K562 (cell line): ENCODE measurements at regions of chr9 and their contacts with region 1.

Region 1: GRCh38 chr9:137492464-137493162 is 33.5 kb upstream of the NSMF start:
- DNase-seq: peak; percentile 97 to 99 (median 99)
- ATAC-seq: peak; percentile 99
- H3K4me3 ChIP-seq: no peak overlapping the region
- H3K27ac ChIP-seq: peak overlapping the region; percentile 55; the same call in 2 of the 3 replicates
- H3K4me1 ChIP-seq: peaks cover 44 to 64% of the 10 kb centered on the region in 2 experiments
- H3K27me3 ChIP-seq: no peaks in the 10 kb centered on the region; a peak in 1 of 5 replicates
- CTCF ChIP-seq: no peak
- EP300 ChIP-seq: no peak
- POLR2A ChIP-seq: no peak
- RAD21 ChIP-seq: no peak

Region 2: DNA sequence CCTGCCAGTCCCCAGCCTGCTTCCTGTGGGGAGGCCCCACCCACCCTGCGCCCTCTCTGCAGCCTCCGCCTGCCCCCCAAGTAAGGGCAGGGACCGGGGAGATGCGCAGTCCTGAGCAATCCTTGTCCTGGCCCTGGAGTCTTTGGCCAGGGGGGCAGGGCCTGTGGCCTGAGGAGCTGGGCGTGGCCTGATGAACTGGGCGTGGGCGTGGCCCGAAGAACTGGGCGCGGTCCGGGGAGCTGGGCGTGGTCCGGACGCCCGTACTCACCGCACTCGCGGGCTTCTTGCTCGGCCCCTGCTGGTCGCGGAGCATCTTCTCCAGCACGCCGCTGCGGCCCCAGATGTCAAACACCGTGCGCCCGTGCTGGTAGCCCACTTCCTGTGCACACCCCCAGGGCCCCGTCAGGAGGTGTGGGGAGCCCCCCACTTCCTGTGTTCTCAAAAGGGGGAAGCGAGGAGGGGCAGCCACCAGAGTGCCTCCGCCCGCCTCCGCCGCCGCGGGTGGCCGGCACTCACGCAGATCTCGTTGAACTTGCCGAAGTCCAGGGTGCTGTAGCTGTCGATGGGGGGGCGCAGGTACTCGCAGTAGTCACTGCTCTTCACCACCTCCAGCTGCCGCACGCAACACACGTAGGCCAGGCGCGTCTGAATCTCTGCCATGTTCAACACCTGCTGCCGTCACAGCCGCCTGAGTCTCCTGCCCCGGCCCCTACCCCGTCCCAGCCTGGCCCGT is 30.8 kb before region 1 on chr9:
- CTCF ChIA-PET with region 1: no interaction called
- POLR2A ChIA-PET with region 1: interaction called, 3 read pairs
- in situ Hi-C with region 1: no loop called
- intact Hi-C with region 1: loop called (anchors 2 kb)
- DNase-seq: peak; percentile 92 to 95 (median 94)
- ATAC-seq: peak; percentile 96
- H3K4me3 ChIP-seq: peak overlapping the region; percentile 32
- H3K27ac ChIP-seq: no peak overlapping the region
- H3K4me1 ChIP-seq: peaks cover 17 to 95% of the 10 kb centered on the region in 2 experiments
- H3K27me3 ChIP-seq: no peaks in the 10 kb centered on the region
- CTCF ChIP-seq: peak; percentile 50 to 62 (median 52)
- EP300 ChIP-seq: no peak
- POLR2A ChIP-seq: 0 out of 2 replicates have a peak, but pooled peaks have one; percentile 45
- RAD21 ChIP-seq: peak in 1 of 2 experiments; percentile 29; a peak in 3 of 4 replicates

Region 3: DNA sequence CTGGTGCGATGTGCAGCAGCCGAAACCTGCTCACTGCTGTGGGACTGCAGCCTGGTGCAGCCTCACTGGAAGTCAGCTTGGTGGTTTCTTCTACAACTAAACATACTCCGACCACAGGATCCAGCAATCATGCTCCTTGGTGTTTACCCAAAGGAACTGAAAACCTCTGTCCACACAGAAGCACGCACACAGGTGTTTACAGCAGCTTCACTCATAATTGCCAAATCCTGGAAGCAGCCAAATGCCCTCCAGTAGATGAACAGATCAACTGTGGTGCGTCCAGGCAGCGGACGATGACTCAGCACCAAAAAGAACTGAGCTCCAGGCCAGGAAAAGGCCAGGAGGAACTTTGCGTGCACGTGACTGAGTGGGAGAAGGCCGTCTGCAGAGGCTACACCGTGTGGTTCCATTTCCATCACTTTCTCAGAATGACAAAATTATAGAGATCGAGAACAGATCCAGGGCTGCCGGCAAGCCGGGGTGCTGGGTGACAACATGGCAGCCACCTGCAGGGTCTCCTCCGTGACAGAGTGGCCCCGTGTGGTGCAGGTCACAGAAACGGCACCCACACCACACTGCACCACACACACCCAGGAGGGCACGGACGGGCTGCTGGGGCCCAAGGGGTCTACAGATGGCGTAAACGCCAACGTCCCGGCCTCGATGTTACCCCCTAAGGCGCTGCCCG is 10.4 kb before region 1 on chr9:
- CTCF ChIA-PET with region 1: no interaction called
- POLR2A ChIA-PET with region 1: interaction called, 11 read pairs
- in situ Hi-C with region 1: no loop called
- intact Hi-C with region 1: no loop called
- DNase-seq: peak; percentile 73 to 91 (median 76)
- ATAC-seq: peak; percentile 95
- H3K4me3 ChIP-seq: no peak overlapping the region
- H3K27ac ChIP-seq: peak overlapping the region; percentile 82
- H3K4me1 ChIP-seq: peaks cover 11 to 79% of the 10 kb centered on the region in 2 experiments
- H3K27me3 ChIP-seq: no peaks in the 10 kb centered on the region
- CTCF ChIP-seq: no peak
- EP300 ChIP-seq: peak; percentile 57
- POLR2A ChIP-seq: no peak
- RAD21 ChIP-seq: no peak

Region 4: GRCh38 chr9:137789295-137789895 is 296.8 kb after region 1 on chr9:
- CTCF ChIA-PET with region 1: no interaction called
- POLR2A ChIA-PET with region 1: no interaction called
- in situ Hi-C with region 1: no loop called
- intact Hi-C with region 1: no loop called
- DNase-seq: no peak
- ATAC-seq: no peak
- H3K4me3 ChIP-seq: no peak overlapping the region
- H3K27ac ChIP-seq: no peak overlapping the region
- H3K4me1 ChIP-seq: no peaks in the 10 kb centered on the region
- H3K27me3 ChIP-seq: no peaks in the 10 kb centered on the region
- CTCF ChIP-seq: no peak
- EP300 ChIP-seq: no peak
- POLR2A ChIP-seq: no peak
- RAD21 ChIP-seq: no peak